ENCODE measurements at regions of chr4 and their contacts with region 1.

Region 1: DNA sequence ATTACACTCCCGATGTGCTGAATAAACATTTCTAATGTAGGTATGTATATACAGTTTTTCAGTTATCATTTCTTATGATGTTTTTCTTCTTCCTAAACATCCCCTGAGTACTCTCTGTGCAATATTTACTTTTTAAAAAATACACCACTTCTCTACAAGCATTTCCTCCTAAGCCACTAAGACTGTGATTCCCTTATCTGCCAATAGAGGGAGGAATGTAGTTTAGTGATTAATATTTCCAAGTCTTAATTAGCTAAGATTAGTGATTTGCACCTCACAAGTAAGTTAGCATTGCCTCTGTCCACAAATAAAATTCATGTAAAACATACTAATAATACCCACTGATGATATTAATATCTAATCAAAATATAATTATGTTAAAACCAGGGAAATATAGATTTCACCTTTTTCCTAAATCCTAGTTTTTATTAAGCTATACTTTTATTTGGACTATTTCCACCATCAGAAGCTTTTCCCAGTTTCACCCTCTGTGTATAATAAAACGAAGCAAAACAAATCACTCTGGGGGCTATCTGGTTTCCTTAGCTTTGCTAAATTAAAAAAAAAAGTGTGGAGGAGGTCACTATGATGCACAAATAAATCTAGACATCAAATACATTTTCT is 909.1 kb downstream of the FAT4 start:
- DNase-seq: peak; percentile 2
- H3K4me3 ChIP-seq: no peak overlapping the region
- H3K27ac ChIP-seq: no peak overlapping the region
- H3K4me1 ChIP-seq: no peaks in the 10 kb centered on the region
- H3K27me3 ChIP-seq: no peaks in the 10 kb centered on the region
- CTCF ChIP-seq: peak; percentile 69 to 74

Region 2: GRCh38 chr4:126405369-126405982 is 181.6 kb after region 1 on chr4:
- CTCF ChIA-PET with region 1: no interaction called
- dilution Hi-C with region 1: no loop called
- in situ Hi-C with region 1: no loop called
- intact Hi-C with region 1: loop called (anchors 2 kb)
- DNase-seq: peak; percentile 16
- H3K4me3 ChIP-seq: no peak overlapping the region
- H3K27ac ChIP-seq: no peak overlapping the region
- H3K4me1 ChIP-seq: peaks cover 14% of the 10 kb centered on the region
- H3K27me3 ChIP-seq: no peaks in the 10 kb centered on the region
- CTCF ChIP-seq: peak; percentile 53 to 60

Region 3: DNA sequence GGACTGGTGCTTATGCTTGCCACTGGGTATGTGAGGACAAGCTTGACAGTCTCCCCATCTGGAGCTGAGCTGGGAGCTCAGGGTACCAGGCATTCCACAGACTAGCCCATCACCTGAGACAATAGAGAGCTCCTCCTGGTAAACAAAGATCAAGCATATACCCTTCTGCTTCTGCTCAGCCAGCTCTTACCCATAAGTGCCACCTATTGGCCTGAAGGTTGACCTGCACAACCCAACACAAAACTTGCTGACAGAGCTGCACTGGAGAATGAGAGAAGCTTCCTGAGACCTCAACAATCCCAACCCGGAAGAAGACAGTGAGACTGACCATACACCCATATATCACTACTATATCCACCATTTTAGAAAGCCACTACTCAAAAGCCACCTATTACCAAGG is 359.6 kb after region 1 on chr4:
- CTCF ChIA-PET with region 1: interaction called, 5 read pairs
- dilution Hi-C with region 1: no loop called
- in situ Hi-C with region 1: no loop called
- intact Hi-C with region 1: loop called (anchors 2 kb)
- DNase-seq: peak; percentile 20
- H3K4me3 ChIP-seq: no peak overlapping the region
- H3K27ac ChIP-seq: no peak overlapping the region
- H3K4me1 ChIP-seq: no peaks in the 10 kb centered on the region
- H3K27me3 ChIP-seq: no peaks in the 10 kb centered on the region
- CTCF ChIP-seq: peak; percentile 46 to 65

Measured in mammary epithelial cell (primary cell).